H1 (cell line): ENCODE measurements at regions of chr17 and their contacts with region 1.

Region 1: GRCh38 chr17:42153919-42154742 is 658 bp downstream of the RAB5C start:
- DNase-seq: no peak
- H3K4me3 ChIP-seq: peak overlapping the region; percentile 64 to 93 (median 87)
- H3K27ac ChIP-seq: no peak overlapping the region
- H3K4me1 ChIP-seq: peaks cover 6 to 18% (median 7%) of the 10 kb centered on the region in 4 experiments; a peak in 4 of 7 replicates
- H3K27me3 ChIP-seq: no peaks in the 10 kb centered on the region
- CTCF ChIP-seq: no peak
- EP300 ChIP-seq: no peak
- POLR2A ChIP-seq: no peak
- RAD21 ChIP-seq: no peak

Region 2: DNA sequence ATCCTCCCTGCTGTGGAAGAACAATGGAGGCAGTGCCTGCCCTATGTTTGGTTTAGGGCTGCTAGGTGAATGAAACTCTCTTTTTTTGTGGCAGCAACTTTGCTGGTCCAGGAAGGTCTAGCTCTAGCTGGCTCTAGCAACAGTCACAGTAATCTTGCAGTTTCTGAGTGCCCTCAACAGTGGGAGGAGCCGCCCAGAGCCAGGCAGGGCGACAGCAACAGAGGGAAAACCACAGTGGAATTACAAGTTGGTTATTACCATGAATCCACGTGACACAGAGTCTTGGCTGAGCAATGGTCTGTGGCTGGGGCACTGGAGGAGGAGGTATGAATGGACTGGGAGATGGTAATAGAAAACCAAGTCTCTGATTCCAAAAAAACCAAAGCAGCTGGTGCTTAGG is 21.2 kb before region 1 on chr17:
- CTCF ChIA-PET with region 1: interaction called, 11 read pairs
- POLR2A ChIA-PET with region 1: interaction called, 8 read pairs
- DNase-seq: no peak
- H3K4me3 ChIP-seq: no peak overlapping the region
- H3K27ac ChIP-seq: no peak overlapping the region
- H3K4me1 ChIP-seq: peaks cover 0 to 6% (median 1%) of the 10 kb centered on the region in 4 experiments; a peak in 3 of 7 replicates
- H3K27me3 ChIP-seq: no peaks in the 10 kb centered on the region
- CTCF ChIP-seq: no peak
- EP300 ChIP-seq: no peak
- POLR2A ChIP-seq: no peak
- RAD21 ChIP-seq: no peak

Region 3: DNA sequence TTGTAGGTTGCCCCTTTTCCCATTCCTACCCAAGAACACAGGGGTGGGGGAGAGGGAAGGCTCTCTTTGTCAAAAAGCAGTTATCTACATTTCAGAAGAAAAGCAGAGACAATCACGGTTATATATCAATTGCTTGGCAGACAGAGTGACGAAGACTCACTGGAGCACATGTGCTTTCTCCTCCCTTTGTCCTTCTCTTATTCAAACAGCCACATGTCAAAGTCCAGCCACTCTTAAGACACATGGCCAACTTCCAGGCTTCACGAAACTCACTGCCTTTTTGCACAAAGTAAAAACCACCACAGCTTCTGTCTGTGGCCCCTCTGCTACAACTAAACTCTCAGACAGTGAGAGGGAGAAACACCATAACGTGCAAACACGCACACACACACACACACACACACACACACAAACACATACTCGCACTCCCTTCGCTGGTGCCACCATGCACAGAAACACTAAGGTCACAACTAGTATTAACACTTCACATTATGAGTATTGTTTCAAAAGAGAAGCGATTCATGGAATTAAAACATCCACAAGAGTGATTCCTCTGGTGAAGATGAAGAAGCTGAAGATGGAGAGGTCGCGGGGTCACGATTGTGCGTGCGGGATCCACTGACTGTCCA is 47.1 kb after region 1 on chr17:
- CTCF ChIA-PET with region 1: no interaction called
- POLR2A ChIA-PET with region 1: no interaction called
- DNase-seq: no peak
- H3K4me3 ChIP-seq: no peak overlapping the region
- H3K27ac ChIP-seq: no peak overlapping the region
- H3K4me1 ChIP-seq: no peaks in the 10 kb centered on the region
- H3K27me3 ChIP-seq: no peaks in the 10 kb centered on the region
- CTCF ChIP-seq: no peak
- EP300 ChIP-seq: no peak
- POLR2A ChIP-seq: no peak
- RAD21 ChIP-seq: no peak